Breast epithelium (tissue), 4 donors: ENCODE measurements at regions of chr3 and their contacts with region 1.

Region 1: GRCh38 chr3:32093204-32093603 is 13.2 kb upstream of the GPD1L start:
- DNase-seq: no peak
- H3K4me3 ChIP-seq: no peak overlapping the region
- H3K27ac ChIP-seq: no peak overlapping the region
- H3K4me1 ChIP-seq: no peaks in the 10 kb centered on the region
- H3K27me3 ChIP-seq: no peaks in the 10 kb centered on the region
- CTCF ChIP-seq: no peak
- POLR2A ChIP-seq: no peak

Region 2: GRCh38 chr3:31157046-31157693 is 936.0 kb before region 1 on chr3:
- intact Hi-C with region 1: loop called (anchors 5 kb)
- DNase-seq: no peak
- H3K4me3 ChIP-seq: no peak overlapping the region
- H3K27ac ChIP-seq: no peak overlapping the region
- H3K4me1 ChIP-seq: no peaks in the 10 kb centered on the region
- H3K27me3 ChIP-seq: no peaks in the 10 kb centered on the region
- CTCF ChIP-seq: no peak
- POLR2A ChIP-seq: no peak